ENCODE measurements at regions of chr1 and their contacts with region 1.

Region 1: DNA sequence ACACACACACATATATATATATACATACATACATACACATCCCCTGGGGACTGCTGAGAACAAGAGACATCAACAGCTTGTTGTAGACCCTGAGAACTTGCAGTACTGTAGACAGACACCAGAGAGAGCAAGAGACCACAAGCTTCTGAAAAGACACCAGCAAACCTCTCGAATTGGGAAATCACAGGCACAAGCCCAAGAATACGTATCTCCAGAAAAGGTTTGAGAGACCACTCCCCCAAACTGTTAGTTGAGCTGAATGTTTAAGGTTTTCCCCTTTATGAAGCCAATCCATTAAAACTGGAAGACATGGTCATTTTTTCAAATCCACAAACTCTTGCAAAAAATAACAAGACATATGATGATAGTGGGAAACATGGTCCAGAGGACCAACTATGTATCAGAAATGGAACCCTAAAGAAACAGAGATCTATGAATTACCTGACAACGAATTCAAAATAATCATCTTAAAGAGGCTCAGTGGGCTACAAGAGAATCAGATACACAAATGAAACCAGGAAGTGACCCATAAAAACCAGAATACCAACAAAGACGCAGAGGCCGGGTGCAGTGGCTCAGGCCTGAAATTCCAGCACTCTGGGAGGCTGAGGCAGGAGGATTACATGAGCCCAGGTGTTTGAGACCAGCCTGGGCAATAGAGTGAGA is 45.1 kb downstream of the SLC2A1 start:
- DNase-seq: peak; percentile 82
- ATAC-seq: peak; percentile 94
- H3K4me3 ChIP-seq: no peak overlapping the region
- H3K27ac ChIP-seq: no peak overlapping the region
- H3K4me1 ChIP-seq: no peaks in the 10 kb centered on the region
- H3K27me3 ChIP-seq: no peaks in the 10 kb centered on the region
- CTCF ChIP-seq: peak; percentile 72

Region 2: DNA sequence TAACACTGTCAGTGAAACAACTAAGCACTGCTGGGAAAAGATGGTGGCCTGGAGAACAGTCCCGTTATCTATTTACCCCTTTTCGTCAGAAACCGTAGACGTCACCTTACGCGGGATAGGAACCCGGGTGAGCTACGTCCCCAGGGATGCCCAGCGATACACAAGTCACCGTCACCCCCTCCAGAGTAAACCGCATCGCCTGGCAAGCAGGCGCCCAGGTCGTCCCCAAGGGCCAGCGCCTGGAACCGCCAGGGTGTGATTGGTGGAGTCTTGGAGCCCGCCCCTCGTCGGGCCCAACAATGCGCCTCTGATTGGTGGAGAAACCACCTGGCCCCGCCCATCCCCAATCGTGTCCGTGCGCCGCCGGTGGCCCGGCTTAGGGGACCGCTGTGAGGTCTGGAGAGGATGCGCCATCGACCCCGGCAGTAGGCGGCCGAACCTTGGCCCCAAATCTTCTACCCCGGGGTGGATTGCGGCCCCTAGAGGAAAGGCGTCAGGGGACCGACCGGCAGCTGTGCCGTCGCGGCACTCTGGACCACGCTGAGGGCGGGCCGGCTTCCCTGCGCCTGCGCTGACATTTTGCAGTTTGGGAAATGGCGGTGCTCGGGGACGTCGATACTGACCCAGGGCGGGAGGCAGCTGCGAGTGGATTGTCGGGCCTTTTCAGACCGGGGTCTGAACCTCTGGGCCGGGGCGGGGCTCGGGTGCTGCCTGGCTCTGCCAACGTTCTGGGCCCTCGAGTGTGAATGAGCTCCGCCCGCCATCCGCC is 10.7 kb after region 1 on chr1:
- CTCF ChIA-PET with region 1: interaction called, 12 read pairs
- POLR2A ChIA-PET with region 1: no interaction called
- in situ Hi-C with region 1: no loop called
- intact Hi-C with region 1: no loop called
- DNase-seq: peak; percentile 84
- ATAC-seq: peak; percentile 98
- H3K4me3 ChIP-seq: peak overlapping the region; percentile 62 to 78
- H3K27ac ChIP-seq: peak overlapping the region; percentile 88
- H3K4me1 ChIP-seq: peaks cover 12% of the 10 kb centered on the region
- H3K27me3 ChIP-seq: no peaks in the 10 kb centered on the region
- CTCF ChIP-seq: no peak